Activated T-helper 1 cell treated with anti-CD3 and anti-CD28 coated beads, Interleukin-12 subunit alpha, Interleukin-12 subunit beta, Interleukin-2, Interleukin-4 antibody, amounts not matched to agents 30 ng/mL and 10 ng/mL and 1 ng/mL, durations not matched to agents 14 hours and 24 hours and 36 hours (primary cell): ENCODE measurements at regions of chr3 and their contacts with region 1.

Region 1: GRCh38 chr3:133588784-133589465 is 15.4 kb downstream of the CDV3 start:
- DNase-seq: no peak
- H3K4me3 Mint-ChIP-seq: no peak overlapping the region
- H3K27ac Mint-ChIP-seq: no peak overlapping the region
- H3K4me1 Mint-ChIP-seq: peaks cover 7% of the 10 kb centered on the region
- H3K27me3 Mint-ChIP-seq: no peaks in the 10 kb centered on the region

Region 2: DNA sequence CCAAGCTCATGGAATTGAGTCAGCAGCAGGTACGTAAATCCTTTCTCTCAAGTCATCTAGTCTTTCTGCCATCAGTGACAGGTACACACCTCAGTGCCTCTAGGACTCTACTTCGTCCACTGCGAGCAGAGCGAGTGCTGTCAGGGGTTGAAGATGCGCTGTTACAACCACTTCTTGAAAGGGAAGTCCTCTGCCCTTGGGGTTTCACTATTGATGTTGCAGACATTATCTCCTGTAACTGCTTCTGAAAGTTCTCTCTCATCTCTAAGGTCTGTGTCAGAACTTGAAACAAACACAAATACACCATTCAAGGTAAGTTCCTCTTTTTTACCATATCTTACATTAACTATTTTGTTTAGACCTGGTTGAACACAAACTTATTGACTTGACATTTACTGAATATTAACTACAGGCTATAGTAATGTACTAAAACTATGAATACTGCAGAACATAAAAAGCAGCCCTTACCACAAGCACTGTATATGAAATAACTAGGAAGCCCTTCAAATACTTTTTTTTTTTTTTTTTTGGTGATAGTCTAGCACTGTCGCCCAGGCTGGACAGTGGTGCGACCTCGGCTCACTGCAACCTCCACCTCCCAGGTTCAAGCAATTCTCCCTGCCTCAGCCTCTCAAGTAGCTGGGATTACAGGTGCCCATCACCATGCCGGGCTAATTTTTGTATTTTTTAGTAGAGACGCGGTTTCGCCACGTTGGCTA is 31.3 kb after region 1 on chr3:
- intact Hi-C with region 1: loop called (anchors 2 kb)
- DNase-seq: no peak
- H3K4me3 Mint-ChIP-seq: no peak overlapping the region
- H3K27ac Mint-ChIP-seq: peak overlapping the region; percentile 29
- H3K4me1 Mint-ChIP-seq: peaks cover 12% of the 10 kb centered on the region
- H3K27me3 Mint-ChIP-seq: no peaks in the 10 kb centered on the region